ENCODE measurements at regions of chr4 and their contacts with region 1.

Region 1: GRCh38 chr4:77203380-77204197 is 46.6 kb downstream of the CCNG2 start:
- DNase-seq: peak; percentile 23
- ATAC-seq: peak; percentile 95
- H3K4me3 ChIP-seq: no peak overlapping the region
- H3K27ac ChIP-seq: no peak overlapping the region
- H3K4me1 ChIP-seq: no peaks in the 10 kb centered on the region
- H3K27me3 ChIP-seq: peaks cover 0 to 3% of the 10 kb centered on the region in 2 experiments; a peak in 1 of 4 replicates
- CTCF ChIP-seq: peak; percentile 68 to 93 (median 84)
- EP300 ChIP-seq: no peak
- POLR2A ChIP-seq: no peak
- RAD21 ChIP-seq: peak; percentile 95

Region 2: GRCh38 chr4:77052352-77052751 is 151.2 kb before region 1 on chr4:
- CTCF ChIA-PET with region 1: interaction called, 258 read pairs
- POLR2A ChIA-PET with region 1: no interaction called
- RAD21 ChIA-PET with region 1: interaction called, 56 read pairs
- SMC1A ChIA-PET with region 1: interaction called, 42 read pairs
- in situ Hi-C with region 1: loop called (anchors 5 kb)
- intact Hi-C with region 1: loop called (anchors 1 kb)
- DNase-seq: no peak
- ATAC-seq: peak; percentile 87
- H3K4me3 ChIP-seq: no peak overlapping the region
- H3K27ac ChIP-seq: no peak overlapping the region
- H3K4me1 ChIP-seq: no peaks in the 10 kb centered on the region
- H3K27me3 ChIP-seq: no peaks in the 10 kb centered on the region
- CTCF ChIP-seq: peak; percentile 73 to 77 (median 73)
- EP300 ChIP-seq: no peak
- POLR2A ChIP-seq: no peak
- RAD21 ChIP-seq: peak; percentile 72

Region 3: GRCh38 chr4:77082886-77083608 is 120.5 kb before region 1 on chr4:
- CTCF ChIA-PET with region 1: interaction called, 15 read pairs
- POLR2A ChIA-PET with region 1: no interaction called
- RAD21 ChIA-PET with region 1: interaction called, 9 read pairs
- SMC1A ChIA-PET with region 1: interaction called, 286 read pairs
- in situ Hi-C with region 1: no loop called
- intact Hi-C with region 1: no loop called
- DNase-seq: no peak
- ATAC-seq: no peak
- H3K4me3 ChIP-seq: no peak overlapping the region
- H3K27ac ChIP-seq: no peak overlapping the region
- H3K4me1 ChIP-seq: no peaks in the 10 kb centered on the region
- H3K27me3 ChIP-seq: no peaks in the 10 kb centered on the region
- CTCF ChIP-seq: no peak
- EP300 ChIP-seq: no peak
- POLR2A ChIP-seq: no peak
- RAD21 ChIP-seq: no peak

Region 4: GRCh38 chr4:77104791-77105540 is 98.6 kb before region 1 on chr4:
- CTCF ChIA-PET with region 1: interaction called, 535 read pairs
- POLR2A ChIA-PET with region 1: interaction called, 3 read pairs
- RAD21 ChIA-PET with region 1: interaction called, 229 read pairs
- SMC1A ChIA-PET with region 1: interaction called, 286 read pairs
- in situ Hi-C with region 1: no loop called
- intact Hi-C with region 1: no loop called
- DNase-seq: no peak
- ATAC-seq: peak; percentile 38
- H3K4me3 ChIP-seq: no peak overlapping the region
- H3K27ac ChIP-seq: no peak overlapping the region
- H3K4me1 ChIP-seq: 0 out of 2 replicates have a peak, but pooled peaks cover 3% of the 10 kb centered on the region
- H3K27me3 ChIP-seq: no peaks in the 10 kb centered on the region
- CTCF ChIP-seq: no peak
- EP300 ChIP-seq: no peak
- POLR2A ChIP-seq: no peak
- RAD21 ChIP-seq: no peak

Region 5: DNA sequence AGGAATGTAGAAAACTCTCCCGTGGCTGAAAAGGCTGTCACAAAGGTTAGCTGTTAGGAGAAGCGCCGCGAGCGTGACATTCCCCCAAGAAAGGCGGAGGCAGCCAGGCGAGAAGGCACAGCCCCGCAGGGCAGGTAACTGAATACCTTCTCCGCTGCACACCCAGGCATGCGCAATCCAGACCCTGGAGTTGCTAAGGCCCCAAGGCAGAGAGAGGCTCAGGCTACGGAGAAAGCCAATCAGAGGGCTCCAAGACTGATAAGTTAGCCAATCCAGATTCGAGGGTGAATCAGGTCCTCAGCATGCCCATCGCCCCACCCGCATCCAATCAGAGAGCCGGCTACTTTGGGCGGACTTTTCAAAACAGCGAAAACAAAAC is 47.1 kb before region 1 on chr4:
- CTCF ChIA-PET with region 1: interaction called, 68 read pairs
- POLR2A ChIA-PET with region 1: interaction called, 7 read pairs
- RAD21 ChIA-PET with region 1: interaction called, 68 read pairs
- SMC1A ChIA-PET with region 1: interaction called, 177 read pairs
- in situ Hi-C with region 1: no loop called
- intact Hi-C with region 1: loop called (anchors 2 kb)
- DNase-seq: peak; percentile 98
- ATAC-seq: peak; percentile 92
- H3K4me3 ChIP-seq: peak overlapping the region; percentile 93
- H3K27ac ChIP-seq: peak overlapping the region; percentile 99
- H3K4me1 ChIP-seq: peaks cover 35% of the 10 kb centered on the region
- H3K27me3 ChIP-seq: no peaks in the 10 kb centered on the region
- CTCF ChIP-seq: no peak
- EP300 ChIP-seq: no peak
- POLR2A ChIP-seq: peak; percentile 76
- RAD21 ChIP-seq: no peak

Region 6: GRCh38 chr4:77215107-77215506 is 11.5 kb after region 1 on chr4:
- CTCF ChIA-PET with region 1: interaction called, 7 read pairs
- POLR2A ChIA-PET with region 1: no interaction called
- RAD21 ChIA-PET with region 1: interaction called, 3 read pairs
- SMC1A ChIA-PET with region 1: interaction called, 17 read pairs
- in situ Hi-C with region 1: no loop called
- intact Hi-C with region 1: no loop called
- DNase-seq: no peak
- ATAC-seq: no peak
- H3K4me3 ChIP-seq: no peak overlapping the region
- H3K27ac ChIP-seq: no peak overlapping the region
- H3K4me1 ChIP-seq: no peaks in the 10 kb centered on the region
- H3K27me3 ChIP-seq: no peaks in the 10 kb centered on the region; a peak in 1 of 4 replicates
- CTCF ChIP-seq: no peak
- EP300 ChIP-seq: no peak
- POLR2A ChIP-seq: no peak
- RAD21 ChIP-seq: no peak

Region 7: GRCh38 chr4:77734928-77735327 is 531.3 kb after region 1 on chr4:
- CTCF ChIA-PET with region 1: no interaction called
- POLR2A ChIA-PET with region 1: no interaction called
- RAD21 ChIA-PET with region 1: no interaction called
- SMC1A ChIA-PET with region 1: no interaction called
- in situ Hi-C with region 1: no loop called
- intact Hi-C with region 1: no loop called
- DNase-seq: peak; percentile 52
- ATAC-seq: peak; percentile 98
- H3K4me3 ChIP-seq: peak overlapping the region; percentile 26; the same call in 1 of the 2 replicates
- H3K27ac ChIP-seq: no peak overlapping the region
- H3K4me1 ChIP-seq: peaks cover 16% of the 10 kb centered on the region
- H3K27me3 ChIP-seq: no peaks in the 10 kb centered on the region
- CTCF ChIP-seq: no peak
- EP300 ChIP-seq: no peak
- POLR2A ChIP-seq: no peak
- RAD21 ChIP-seq: no peak

Region 8: GRCh38 chr4:77777135-77777807 is 573.7 kb after region 1 on chr4:
- CTCF ChIA-PET with region 1: no interaction called
- POLR2A ChIA-PET with region 1: no interaction called
- RAD21 ChIA-PET with region 1: no interaction called
- SMC1A ChIA-PET with region 1: no interaction called
- in situ Hi-C with region 1: no loop called
- intact Hi-C with region 1: no loop called
- DNase-seq: no peak
- ATAC-seq: no peak
- H3K4me3 ChIP-seq: no peak overlapping the region
- H3K27ac ChIP-seq: no peak overlapping the region
- H3K4me1 ChIP-seq: no peaks in the 10 kb centered on the region
- H3K27me3 ChIP-seq: no peaks in the 10 kb centered on the region
- CTCF ChIP-seq: no peak
- EP300 ChIP-seq: no peak
- POLR2A ChIP-seq: no peak
- RAD21 ChIP-seq: no peak

Measured in GM12878 (cell line).